Left cardiac atrium (tissue), 4 donors: ENCODE measurements at regions of chr4 and their contacts with region 1.

Region 1: GRCh38 chr4:145679991-145680455 is at the start of gene C4orf51:
- DNase-seq: no peak
- ATAC-seq: peak; percentile 81 to 90
- total RNA-seq, gene C4orf51: not detected

Region 2: DNA sequence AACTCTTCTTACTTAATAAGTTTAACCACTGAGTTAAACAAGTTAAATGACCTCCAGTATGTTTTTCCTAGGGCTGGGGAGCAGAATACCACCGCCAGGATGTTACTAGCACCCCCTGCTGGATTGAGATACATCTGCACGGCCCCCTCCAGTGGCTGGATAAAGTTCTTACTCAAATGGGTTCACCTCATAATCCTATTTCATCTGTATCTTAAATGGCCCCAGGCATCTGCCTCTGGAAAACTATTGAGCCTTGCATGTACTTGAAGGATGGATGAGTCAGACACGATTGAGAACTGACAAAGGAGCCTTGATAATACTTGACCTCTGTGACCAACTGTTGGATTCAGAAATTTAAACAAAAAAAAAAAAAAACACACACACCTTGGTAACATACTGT is 122.3 kb before region 1 on chr4:
- intact Hi-C with region 1: no loop called
- DNase-seq: peak; percentile 36
- ATAC-seq: peak; percentile 71 to 83

Region 3: DNA sequence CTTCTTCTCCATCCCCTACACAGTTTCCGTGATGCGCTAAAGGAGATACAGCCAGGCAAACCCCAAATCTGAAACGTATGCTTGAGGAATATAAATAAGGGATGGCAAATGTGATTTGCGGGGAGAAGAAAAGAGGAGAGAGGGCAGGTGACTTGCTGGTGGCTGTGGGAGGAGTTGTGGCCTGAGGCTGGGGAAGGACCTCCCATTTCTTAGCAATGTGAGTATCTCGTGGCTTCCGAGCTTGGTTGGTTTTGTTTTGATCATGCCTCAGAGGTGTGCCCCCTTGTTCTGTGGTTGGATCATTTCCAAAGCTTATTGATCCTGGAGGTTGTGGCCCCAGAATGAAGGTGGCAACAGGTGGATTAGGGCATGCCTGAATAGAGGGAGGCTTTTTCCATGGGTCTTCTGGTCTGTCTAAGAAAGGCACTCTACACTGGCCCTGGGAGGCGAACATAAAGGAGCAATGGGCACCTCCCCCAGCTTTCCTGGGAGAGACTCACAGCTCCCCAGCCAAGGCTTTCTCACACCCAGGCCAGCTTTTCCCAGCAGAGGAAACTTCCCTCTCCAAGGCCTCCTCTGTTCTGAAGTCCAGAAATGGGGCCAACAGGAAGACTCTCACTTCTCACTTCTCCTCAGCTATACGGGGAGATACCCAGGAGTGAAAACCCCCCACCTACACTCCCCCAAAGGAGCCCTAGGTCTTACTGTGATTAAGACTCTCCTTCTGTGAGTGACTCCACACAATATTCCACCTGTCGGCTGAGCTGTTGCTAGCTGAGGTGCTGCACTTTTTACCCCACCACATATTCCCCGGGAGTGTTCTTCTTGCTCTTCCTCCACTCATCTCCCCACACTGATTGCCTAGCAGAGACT is 40.0 kb after region 1 on chr4:
- intact Hi-C with region 1: loop called in 1 of 2 experiments (anchors 5 kb)
- DNase-seq: no peak
- ATAC-seq: peak; percentile 14 to 16